ENCODE measurements at regions of chr22 and their contacts with region 1.

Region 1: GRCh38 chr22:37608477-37609239 is at the start of gene GGA1:
- DNase-seq: peak; percentile 94
- H3K4me3 ChIP-seq: peak within 1 kb of the TSS; percentile 75
- H3K4me3 Mint-ChIP-seq: peak within 1 kb of the TSS; percentile 87
- H3K27ac Mint-ChIP-seq: peak within 1 kb of the TSS; percentile 95
- H3K4me1 ChIP-seq: peaks cover 12% of the 10 kb centered on the region
- H3K4me1 Mint-ChIP-seq: peaks cover 6% of the 10 kb centered on the region
- H3K27me3 ChIP-seq: no peaks in the 10 kb centered on the region
- H3K27me3 Mint-ChIP-seq: no peaks in the 10 kb centered on the region
- CTCF ChIP-seq: no peak
- total RNA-seq, gene GGA1: 65.7 and 72.8 TPM in 2 replicates

Region 2: DNA sequence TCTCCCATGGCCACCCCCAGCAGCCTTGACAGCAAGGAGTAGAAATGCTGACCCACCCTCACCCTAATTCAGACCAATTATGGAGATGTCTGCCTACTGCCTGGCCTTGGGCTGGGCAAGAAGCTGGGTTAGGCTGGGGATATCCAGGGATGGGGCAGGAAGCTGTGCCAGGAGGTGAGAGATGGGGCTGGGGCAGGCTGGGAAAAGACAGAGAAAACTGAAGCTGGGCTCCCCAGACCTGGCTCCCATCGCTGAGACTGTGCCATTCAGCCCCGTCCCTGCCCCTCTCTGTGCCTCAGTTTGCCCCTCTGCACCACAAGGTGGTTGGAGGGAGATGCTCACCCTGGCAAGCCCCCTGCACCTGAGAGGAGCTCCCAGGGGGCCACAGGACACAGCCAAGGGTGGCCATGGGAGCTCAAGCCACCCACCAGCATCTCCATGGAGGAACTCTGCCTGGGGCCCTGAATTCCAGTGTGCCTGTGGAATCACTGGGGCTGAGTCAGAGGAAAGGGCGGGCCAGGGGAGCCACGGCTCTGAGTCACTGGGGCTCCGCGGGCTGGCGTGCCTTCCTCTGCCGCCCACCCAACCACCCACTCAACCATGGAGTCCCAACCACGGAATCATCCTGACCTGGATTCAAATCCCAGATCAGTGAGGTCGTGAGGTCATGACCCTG is 83.4 kb before region 1 on chr22:
- CTCF ChIA-PET with region 1: no interaction called
- POLR2A ChIA-PET with region 1: no interaction called
- intact Hi-C with region 1: no loop called
- DNase-seq: no peak
- H3K4me3 ChIP-seq: no peak overlapping the region
- H3K4me3 Mint-ChIP-seq: no peak overlapping the region
- H3K27ac Mint-ChIP-seq: no peak overlapping the region
- H3K4me1 ChIP-seq: peaks cover 20% of the 10 kb centered on the region
- H3K4me1 Mint-ChIP-seq: peaks cover 12% of the 10 kb centered on the region
- H3K27me3 ChIP-seq: no peaks in the 10 kb centered on the region
- H3K27me3 Mint-ChIP-seq: no peaks in the 10 kb centered on the region
- CTCF ChIP-seq: no peak

Region 3: GRCh38 chr22:37538590-37539357 is 69.9 kb before region 1 on chr22:
- CTCF ChIA-PET with region 1: interaction called, 5 read pairs
- POLR2A ChIA-PET with region 1: no interaction called
- intact Hi-C with region 1: loop called (anchors 5 kb)
- DNase-seq: peak; percentile 92 to 94
- H3K4me3 ChIP-seq: no peak overlapping the region
- H3K4me3 Mint-ChIP-seq: peak overlapping the region; percentile 50
- H3K27ac Mint-ChIP-seq: peak overlapping the region; percentile 66
- H3K4me1 ChIP-seq: peaks cover 12% of the 10 kb centered on the region
- H3K4me1 Mint-ChIP-seq: peaks cover 18% of the 10 kb centered on the region
- H3K27me3 ChIP-seq: no peaks in the 10 kb centered on the region
- H3K27me3 Mint-ChIP-seq: no peaks in the 10 kb centered on the region
- CTCF ChIP-seq: peak; percentile 93 to 96

Region 4: GRCh38 chr22:37566903-37567820 is 41.5 kb before region 1 on chr22:
- CTCF ChIA-PET with region 1: interaction called, 15 read pairs
- POLR2A ChIA-PET with region 1: no interaction called
- intact Hi-C with region 1: loop called (anchors 5 kb)
- DNase-seq: peak; percentile 79 to 90
- H3K4me3 ChIP-seq: no peak overlapping the region
- H3K4me3 Mint-ChIP-seq: peak overlapping the region; percentile 16
- H3K27ac Mint-ChIP-seq: peak overlapping the region; percentile 48
- H3K4me1 ChIP-seq: peaks cover 80% of the 10 kb centered on the region
- H3K4me1 Mint-ChIP-seq: peaks cover 33% of the 10 kb centered on the region
- H3K27me3 ChIP-seq: no peaks in the 10 kb centered on the region
- H3K27me3 Mint-ChIP-seq: no peaks in the 10 kb centered on the region
- CTCF ChIP-seq: peak; percentile 90 to 93

Region 5: DNA sequence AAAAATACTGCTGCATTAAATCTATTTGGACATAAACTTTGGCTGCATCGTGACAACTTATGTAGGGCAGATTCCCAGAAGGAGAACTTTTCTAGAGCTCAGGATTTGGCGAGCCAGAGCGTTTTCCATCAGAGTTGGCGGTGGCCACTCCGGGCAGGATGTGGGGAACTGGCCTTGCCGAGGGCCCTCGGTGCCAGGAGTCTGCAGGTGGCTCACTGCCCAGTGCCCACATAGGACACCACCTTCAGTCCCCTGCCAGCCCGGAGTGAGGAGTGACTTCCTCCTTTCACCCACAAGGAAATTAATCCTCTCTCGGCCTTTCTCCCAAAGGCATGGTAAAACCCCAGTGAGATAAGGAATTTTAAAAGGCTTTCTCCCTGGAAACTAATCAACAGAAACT is 27.2 kb before region 1 on chr22:
- CTCF ChIA-PET with region 1: interaction called, 10 read pairs
- POLR2A ChIA-PET with region 1: interaction called, 12 read pairs
- intact Hi-C with region 1: no loop called
- DNase-seq: no peak
- H3K4me3 ChIP-seq: no peak overlapping the region
- H3K4me3 Mint-ChIP-seq: no peak overlapping the region
- H3K27ac Mint-ChIP-seq: no peak overlapping the region
- H3K4me1 ChIP-seq: peaks cover 30% of the 10 kb centered on the region
- H3K4me1 Mint-ChIP-seq: peaks cover 24% of the 10 kb centered on the region
- H3K27me3 ChIP-seq: no peaks in the 10 kb centered on the region
- H3K27me3 Mint-ChIP-seq: no peaks in the 10 kb centered on the region
- CTCF ChIP-seq: no peak

Region 6: DNA sequence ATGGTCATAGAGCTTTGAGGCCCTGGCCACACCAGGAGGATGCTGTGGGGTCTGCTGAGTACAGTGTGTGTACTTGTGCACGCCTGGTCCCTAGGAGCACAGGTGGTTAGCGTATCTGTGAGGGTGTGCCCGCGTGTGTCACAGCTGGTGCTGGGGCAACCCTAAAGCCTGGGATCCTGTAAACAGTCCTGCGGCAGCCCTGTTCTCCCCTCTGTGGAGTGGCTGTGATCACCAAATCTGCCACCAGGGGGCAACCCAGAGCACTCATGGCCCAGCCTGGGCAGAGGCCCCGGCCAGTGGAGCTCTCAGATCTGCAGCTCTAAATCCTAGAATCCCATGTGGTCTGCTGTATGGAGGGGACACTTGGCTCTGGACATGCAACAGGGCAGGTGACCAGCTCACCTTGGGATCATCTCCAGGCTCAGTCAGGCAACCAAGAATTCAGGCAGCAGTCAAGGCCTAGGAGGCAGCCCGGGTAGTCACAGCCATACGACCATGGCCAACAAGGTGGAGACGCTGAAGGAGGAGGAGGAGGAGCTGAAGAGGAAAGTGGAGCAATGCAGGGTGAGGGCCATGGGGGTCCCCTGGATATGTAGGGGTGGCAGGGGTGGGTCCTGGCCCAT is 34.7 kb after region 1 on chr22:
- CTCF ChIA-PET with region 1: interaction called, 10 read pairs
- POLR2A ChIA-PET with region 1: interaction called, 4 read pairs
- intact Hi-C with region 1: loop called (anchors 2 kb)
- DNase-seq: peak; percentile 69 to 90
- H3K4me3 ChIP-seq: no peak overlapping the region
- H3K4me3 Mint-ChIP-seq: no peak overlapping the region
- H3K27ac Mint-ChIP-seq: no peak overlapping the region
- H3K4me1 ChIP-seq: peaks cover 21% of the 10 kb centered on the region
- H3K4me1 Mint-ChIP-seq: peaks cover 13% of the 10 kb centered on the region
- H3K27me3 ChIP-seq: no peaks in the 10 kb centered on the region
- H3K27me3 Mint-ChIP-seq: no peaks in the 10 kb centered on the region
- CTCF ChIP-seq: peak; percentile 83 to 85

Region 7: GRCh38 chr22:37686002-37686982 is 77.6 kb after region 1 on chr22 and contains the start of gene NOL12:
- CTCF ChIA-PET with region 1: interaction called, 9 read pairs
- POLR2A ChIA-PET with region 1: interaction called, 9 read pairs
- intact Hi-C with region 1: loop called (anchors 10 kb)
- DNase-seq: peak; percentile 85
- H3K4me3 ChIP-seq: peak within 1 kb of the TSS; percentile 97
- H3K4me3 Mint-ChIP-seq: peak within 1 kb of the TSS; percentile 99
- H3K27ac Mint-ChIP-seq: peak within 1 kb of the TSS; percentile 95
- H3K4me1 ChIP-seq: peaks cover 16% of the 10 kb centered on the region; the same call in 1 of the 2 replicates
- H3K4me1 Mint-ChIP-seq: no peaks in the 10 kb centered on the region
- H3K27me3 ChIP-seq: no peaks in the 10 kb centered on the region; the same call in 1 of the 2 replicates
- H3K27me3 Mint-ChIP-seq: no peaks in the 10 kb centered on the region
- CTCF ChIP-seq: no peak
- total RNA-seq, gene NOL12: 20.2 and 22.3 TPM in 2 replicates

Measured in Caco-2 (cell line).